AG04449 (cell line): ENCODE measurements at regions of chr14 and their contacts with region 1.

Region 1: GRCh38 chr14:69493791-69494190 is 9.3 kb downstream of the PLEKHD1 start:
- DNase-seq: no peak
- H3K4me3 ChIP-seq: no peak overlapping the region
- CTCF ChIP-seq: no peak

Region 2: GRCh38 chr14:69481815-69482568 is 11.8 kb before region 1 on chr14:
- CTCF ChIA-PET with region 1: interaction called, 12 read pairs
- POLR2A ChIA-PET with region 1: no interaction called
- DNase-seq: no peak
- H3K4me3 ChIP-seq: no peak overlapping the region
- CTCF ChIP-seq: no peak